ENCODE measurements at regions of chr5 and their contacts with region 1.

Region 1: GRCh38 chr5:143403593-143404415 is at the start of gene NR3C1:
- DNase-seq: peak; percentile 90 to 96 (median 96)
- ATAC-seq: peak; percentile 88 to 90
- H3K4me3 ChIP-seq: peak within 1 kb of the TSS; percentile 78
- H3K27ac ChIP-seq: peak within 1 kb of the TSS; percentile 97
- H3K4me1 ChIP-seq: peaks cover 3% of the 10 kb centered on the region
- H3K27me3 ChIP-seq: no peaks in the 10 kb centered on the region
- total RNA-seq, gene NR3C1: 47.2 to 66.5 (median 50.1) TPM

Region 2: GRCh38 chr5:142922223-142922952 is 481.4 kb before region 1 on chr5:
- intact Hi-C with region 1: loop called in 1 of 4 experiments (anchors 5 kb)
- DNase-seq: no peak
- ATAC-seq: peak; percentile 48 to 51
- H3K4me3 ChIP-seq: no peak overlapping the region
- H3K27ac ChIP-seq: no peak overlapping the region
- H3K4me1 ChIP-seq: no peaks in the 10 kb centered on the region
- H3K27me3 ChIP-seq: no peaks in the 10 kb centered on the region

Region 3: DNA sequence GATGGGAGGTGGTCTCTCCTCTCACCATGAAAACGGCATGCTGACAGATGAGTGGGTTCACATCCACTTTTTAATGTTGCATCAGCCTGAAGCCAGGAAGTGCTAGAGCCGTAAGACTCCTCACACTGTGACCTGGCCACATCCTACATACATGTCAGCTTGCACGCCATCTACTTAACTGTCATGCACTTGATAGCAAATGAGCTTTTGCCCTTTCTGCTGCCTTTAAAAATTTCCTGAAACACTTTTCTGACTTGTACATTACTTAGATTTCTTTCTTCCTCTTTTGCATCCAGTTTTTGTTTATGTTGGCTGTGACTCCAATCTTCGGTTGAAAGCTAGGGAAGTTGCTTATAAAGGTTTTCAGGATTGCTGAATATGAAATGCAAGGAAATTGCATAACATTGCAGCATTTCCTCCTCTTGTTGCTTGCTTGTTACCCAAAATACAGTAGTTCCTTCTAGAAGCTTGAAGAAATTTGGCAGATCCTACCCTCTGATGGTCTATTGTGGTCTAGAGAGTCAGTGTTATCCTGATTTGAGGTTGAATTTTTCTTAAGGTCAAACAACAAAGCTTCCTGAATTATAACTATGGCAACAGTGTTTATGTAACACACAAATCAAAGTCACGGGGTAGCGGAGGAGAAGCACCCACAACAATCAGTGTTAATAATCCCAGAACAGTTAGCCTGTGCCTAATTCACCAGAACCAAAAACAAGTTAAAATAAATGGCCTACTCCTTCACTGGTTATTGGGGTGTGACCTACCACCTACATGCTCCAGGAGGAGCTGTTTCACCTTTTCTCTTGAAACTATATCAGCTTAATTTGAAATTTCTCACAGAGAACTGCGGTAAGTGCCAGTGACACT is 401.1 kb before region 1 on chr5:
- intact Hi-C with region 1: loop called in 2 of 4 experiments (anchors 5 to 10 kb)
- DNase-seq: peak in 1 of 3 donors; percentile 45
- ATAC-seq: peak; percentile 80 to 85
- H3K4me3 ChIP-seq: no peak overlapping the region
- H3K27ac ChIP-seq: peak overlapping the region; percentile 83
- H3K4me1 ChIP-seq: peaks cover 25% of the 10 kb centered on the region
- H3K27me3 ChIP-seq: no peaks in the 10 kb centered on the region

Region 4: GRCh38 chr5:143008809-143009521 is 394.8 kb before region 1 on chr5:
- intact Hi-C with region 1: loop called in 2 of 4 experiments (anchors 5 to 10 kb)
- DNase-seq: no peak
- ATAC-seq: peak in 1 of 2 donors; percentile 9
- H3K4me3 ChIP-seq: no peak overlapping the region
- H3K27ac ChIP-seq: no peak overlapping the region
- H3K4me1 ChIP-seq: peaks cover 25% of the 10 kb centered on the region
- H3K27me3 ChIP-seq: no peaks in the 10 kb centered on the region

Region 5: DNA sequence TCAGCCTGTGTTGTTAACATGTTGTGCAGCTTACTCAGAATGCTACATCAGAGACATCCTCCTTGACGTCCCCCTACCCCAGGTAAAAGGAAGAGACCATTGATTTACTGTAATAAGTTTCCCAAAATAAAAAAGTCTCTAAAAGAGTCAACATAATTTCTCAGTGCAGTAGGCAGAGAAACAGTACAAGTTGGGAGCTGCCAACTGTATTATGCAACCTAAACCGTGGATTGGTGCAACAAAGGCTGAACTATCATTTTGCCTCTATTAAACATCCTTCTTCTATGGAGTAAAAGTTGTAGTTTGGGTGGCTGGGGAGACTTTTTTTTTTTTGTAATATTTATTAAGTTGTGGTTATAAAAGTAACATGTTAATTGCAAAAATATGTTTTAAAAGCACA is 208.3 kb before region 1 on chr5:
- intact Hi-C with region 1: loop called in 1 of 4 experiments (anchors 10 kb)
- DNase-seq: no peak
- ATAC-seq: peak; percentile 53 to 72
- H3K4me3 ChIP-seq: no peak overlapping the region
- H3K27ac ChIP-seq: no peak overlapping the region
- H3K4me1 ChIP-seq: peaks cover 4% of the 10 kb centered on the region
- H3K27me3 ChIP-seq: no peaks in the 10 kb centered on the region

Region 6: GRCh38 chr5:143543358-143544255 is 139.8 kb after region 1 on chr5:
- intact Hi-C with region 1: no loop called
- DNase-seq: no peak
- ATAC-seq: no peak
- H3K4me3 ChIP-seq: no peak overlapping the region
- H3K27ac ChIP-seq: no peak overlapping the region
- H3K4me1 ChIP-seq: peaks cover 1% of the 10 kb centered on the region
- H3K27me3 ChIP-seq: no peaks in the 10 kb centered on the region

Region 7: GRCh38 chr5:143824851-143825720 is 421.3 kb after region 1 on chr5:
- intact Hi-C with region 1: loop called in 3 of 4 experiments (anchors 5 to 10 kb)
- DNase-seq: peak; percentile 83 to 90 (median 88)
- ATAC-seq: peak; percentile 94
- H3K4me3 ChIP-seq: no peak overlapping the region
- H3K27ac ChIP-seq: no peak overlapping the region
- H3K4me1 ChIP-seq: peaks cover 2% of the 10 kb centered on the region
- H3K27me3 ChIP-seq: no peaks in the 10 kb centered on the region

Region 8: GRCh38 chr5:144060598-144060997 is 656.8 kb after region 1 on chr5:
- intact Hi-C with region 1: no loop called
- DNase-seq: no peak
- ATAC-seq: no peak
- H3K4me3 ChIP-seq: no peak overlapping the region
- H3K27ac ChIP-seq: no peak overlapping the region
- H3K4me1 ChIP-seq: no peaks in the 10 kb centered on the region
- H3K27me3 ChIP-seq: no peaks in the 10 kb centered on the region

Measured in right cardiac atrium (tissue), 5 donors.